ENCODE measurements at regions of chr19 and their contacts with region 1.

Region 1: GRCh38 chr19:2532252-2533071 is 56.5 kb downstream of the GADD45B start:
- DNase-seq: no peak
- H3K4me3 Mint-ChIP-seq: no peak overlapping the region
- H3K27ac Mint-ChIP-seq: peak overlapping the region; percentile 15
- H3K4me1 Mint-ChIP-seq: peaks cover 26% of the 10 kb centered on the region
- H3K27me3 Mint-ChIP-seq: no peaks in the 10 kb centered on the region

Region 2: DNA sequence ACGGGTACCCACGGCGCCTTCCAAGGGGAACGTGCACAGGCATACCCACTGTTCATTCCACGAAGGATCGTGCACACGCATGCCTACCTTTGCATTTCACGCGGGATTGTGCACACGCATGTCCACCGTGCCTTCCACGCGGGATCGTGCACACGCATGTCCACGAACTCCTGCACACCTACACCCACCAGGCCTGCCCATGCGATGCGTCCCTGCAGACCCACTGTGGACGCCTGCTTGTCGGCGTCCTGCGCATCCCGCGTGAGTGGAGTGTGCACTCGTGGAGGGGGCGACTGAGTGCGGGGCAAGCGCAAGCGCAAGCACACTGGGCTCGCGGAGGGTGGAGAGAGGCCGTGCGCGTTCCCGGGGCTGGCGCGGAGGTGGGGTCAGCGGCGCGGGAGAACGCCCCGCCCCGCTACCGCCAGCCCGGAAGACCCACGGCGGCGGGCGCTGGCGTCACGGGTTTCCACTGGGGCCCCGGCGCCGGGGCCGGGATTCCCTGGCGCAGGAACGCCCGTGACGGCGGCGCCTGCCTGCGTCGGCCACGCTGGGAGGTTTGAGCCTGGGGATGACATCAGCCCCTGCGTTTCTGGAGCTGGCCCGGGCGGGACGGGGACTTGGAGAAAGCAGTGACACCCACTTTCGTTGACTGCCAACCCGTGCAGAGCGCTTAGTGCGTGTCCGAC is 37.9 kb before region 1 on chr19:
- intact Hi-C with region 1: loop called (anchors 5 kb)
- DNase-seq: peak; percentile 88
- H3K4me3 Mint-ChIP-seq: peak overlapping the region; percentile 70
- H3K27ac Mint-ChIP-seq: no peak overlapping the region
- H3K4me1 Mint-ChIP-seq: peaks cover 33% of the 10 kb centered on the region
- H3K27me3 Mint-ChIP-seq: peaks cover 48% of the 10 kb centered on the region